Calu3 (cell line): ENCODE measurements at regions of chr5 and their contacts with region 1.

Region 1: GRCh38 chr5:146965761-146966659 is 87.5 kb upstream of the PPP2R2B start:
- DNase-seq: peak; percentile 71
- H3K4me3 Mint-ChIP-seq: no peak overlapping the region
- H3K27ac Mint-ChIP-seq: no peak overlapping the region
- H3K4me1 Mint-ChIP-seq: peaks cover 9% of the 10 kb centered on the region
- H3K27me3 Mint-ChIP-seq: no peaks in the 10 kb centered on the region
- CTCF ChIP-seq: peak; percentile 78

Region 2: DNA sequence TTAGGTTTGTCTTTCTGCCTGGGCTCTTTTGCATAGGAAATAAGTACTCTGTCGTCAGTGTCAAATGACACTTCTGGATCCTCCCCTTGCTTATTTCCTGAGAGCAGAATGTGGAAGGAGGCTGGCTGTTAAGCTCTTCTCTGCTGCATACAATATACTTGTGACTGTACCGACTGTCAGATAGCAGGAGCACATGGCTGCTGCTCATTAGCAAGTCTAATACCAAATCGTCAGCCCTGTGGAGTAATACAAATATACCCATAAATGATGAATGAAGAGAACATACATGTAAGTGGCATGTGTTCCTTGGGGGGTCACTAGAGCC is 449.9 kb before region 1 on chr5 and contains the start of gene GPR151:
- CTCF ChIA-PET with region 1: no interaction called
- intact Hi-C with region 1: no loop called
- DNase-seq: no peak
- H3K4me3 Mint-ChIP-seq: no peak within 1 kb of the TSS
- H3K27ac Mint-ChIP-seq: no peak within 1 kb of the TSS
- H3K4me1 Mint-ChIP-seq: peaks cover 9% of the 10 kb centered on the region
- H3K27me3 Mint-ChIP-seq: no peaks in the 10 kb centered on the region
- CTCF ChIP-seq: no peak
- total RNA-seq, gene GPR151: not detected in 2 replicates

Region 3: GRCh38 chr5:146533260-146533857 is 432.7 kb before region 1 on chr5:
- CTCF ChIA-PET with region 1: interaction called, 29 read pairs
- intact Hi-C with region 1: loop called (anchors 1 kb)
- DNase-seq: peak; percentile 84
- H3K4me3 Mint-ChIP-seq: no peak overlapping the region
- H3K27ac Mint-ChIP-seq: no peak overlapping the region
- H3K4me1 Mint-ChIP-seq: peaks cover 9% of the 10 kb centered on the region
- H3K27me3 Mint-ChIP-seq: peaks cover 6% of the 10 kb centered on the region
- CTCF ChIP-seq: peak; percentile 75

Region 4: DNA sequence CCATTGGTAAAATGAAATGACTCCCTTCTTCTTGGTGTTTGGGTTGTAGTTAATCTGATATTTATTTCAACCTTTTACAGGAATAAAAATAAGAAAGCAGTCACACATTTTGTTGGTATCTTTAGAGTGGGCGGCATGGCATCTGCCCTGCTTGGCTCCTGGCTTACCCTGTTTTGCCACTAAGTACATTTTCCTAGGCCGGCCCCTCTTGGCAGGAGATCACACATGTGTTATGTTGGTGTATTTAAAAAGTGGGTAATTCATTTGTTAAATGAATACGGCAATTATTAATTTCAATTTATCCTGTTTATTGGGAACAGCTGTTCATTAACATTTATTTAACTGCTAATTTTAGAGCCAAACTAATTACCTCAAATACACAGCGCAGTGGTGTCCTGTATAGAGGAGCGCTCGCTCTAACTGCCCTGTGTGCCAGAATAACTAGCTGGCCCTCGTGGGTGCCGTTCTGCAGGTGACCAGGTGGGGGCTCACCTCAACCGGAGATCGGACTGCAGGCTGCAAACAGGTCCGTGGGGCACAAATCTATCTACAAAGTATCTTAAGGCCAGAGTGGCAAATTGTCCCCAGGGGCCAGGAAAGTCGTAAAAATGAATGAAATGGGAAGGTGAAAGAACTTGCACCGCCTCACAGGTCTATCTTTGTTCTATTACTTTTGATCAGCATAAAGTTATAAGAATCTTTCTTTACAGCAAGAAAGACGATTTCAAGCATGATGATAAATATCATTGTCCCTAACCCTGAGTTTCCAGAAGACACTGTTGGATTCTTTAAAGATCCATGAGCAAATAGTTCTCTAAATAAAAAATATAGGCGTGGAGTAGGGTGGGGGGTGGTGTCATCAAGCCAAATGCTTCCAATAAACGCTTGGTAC is 423.8 kb before region 1 on chr5:
- CTCF ChIA-PET with region 1: interaction called, 36 read pairs
- intact Hi-C with region 1: loop called (anchors 1 kb)
- DNase-seq: peak; percentile 94
- H3K4me3 Mint-ChIP-seq: no peak overlapping the region
- H3K27ac Mint-ChIP-seq: no peak overlapping the region
- H3K4me1 Mint-ChIP-seq: peaks cover 20% of the 10 kb centered on the region
- H3K27me3 Mint-ChIP-seq: no peaks in the 10 kb centered on the region
- CTCF ChIP-seq: peak; percentile 97

Region 5: GRCh38 chr5:146662229-146662628 is 303.8 kb before region 1 on chr5:
- CTCF ChIA-PET with region 1: interaction called, 5 read pairs
- intact Hi-C with region 1: loop called (anchors 1 kb)
- DNase-seq: peak; percentile 28
- H3K4me3 Mint-ChIP-seq: no peak overlapping the region
- H3K27ac Mint-ChIP-seq: no peak overlapping the region
- H3K4me1 Mint-ChIP-seq: no peaks in the 10 kb centered on the region
- H3K27me3 Mint-ChIP-seq: peaks cover 16% of the 10 kb centered on the region
- CTCF ChIP-seq: peak; percentile 50

Region 6: GRCh38 chr5:146818822-146819221 is 147.2 kb before region 1 on chr5:
- CTCF ChIA-PET with region 1: no interaction called
- intact Hi-C with region 1: loop called (anchors 2 kb)
- DNase-seq: no peak
- H3K4me3 Mint-ChIP-seq: no peak overlapping the region
- H3K27ac Mint-ChIP-seq: no peak overlapping the region
- H3K4me1 Mint-ChIP-seq: no peaks in the 10 kb centered on the region
- H3K27me3 Mint-ChIP-seq: peaks cover 5% of the 10 kb centered on the region
- CTCF ChIP-seq: no peak

Region 7: DNA sequence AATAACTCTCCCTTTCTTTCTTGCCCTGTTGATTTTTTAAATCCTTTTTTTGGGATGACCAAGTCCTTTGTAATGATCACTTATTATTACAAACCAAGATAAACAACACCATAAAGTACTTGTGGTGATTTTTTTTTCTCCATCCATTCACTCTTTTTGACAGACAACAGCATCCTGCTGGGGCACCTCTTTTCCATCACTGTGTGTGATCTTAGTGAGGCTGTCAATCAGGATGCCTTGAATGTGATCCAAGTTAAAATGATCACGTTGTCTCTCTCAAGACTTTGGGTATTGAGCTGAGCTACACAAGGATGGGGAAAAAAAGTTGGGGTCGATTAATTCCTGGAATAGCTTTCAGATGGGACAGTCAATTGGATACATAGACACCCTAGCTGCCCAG is 13.8 kb before region 1 on chr5:
- CTCF ChIA-PET with region 1: no interaction called
- intact Hi-C with region 1: no loop called
- DNase-seq: no peak
- H3K4me3 Mint-ChIP-seq: no peak overlapping the region
- H3K27ac Mint-ChIP-seq: no peak overlapping the region
- H3K4me1 Mint-ChIP-seq: peaks cover 7% of the 10 kb centered on the region
- H3K27me3 Mint-ChIP-seq: peaks cover 6% of the 10 kb centered on the region
- CTCF ChIP-seq: no peak